Vagina (tissue), 2 donors: ENCODE measurements at regions of chr16 and their contacts with region 1.

Region 1: DNA sequence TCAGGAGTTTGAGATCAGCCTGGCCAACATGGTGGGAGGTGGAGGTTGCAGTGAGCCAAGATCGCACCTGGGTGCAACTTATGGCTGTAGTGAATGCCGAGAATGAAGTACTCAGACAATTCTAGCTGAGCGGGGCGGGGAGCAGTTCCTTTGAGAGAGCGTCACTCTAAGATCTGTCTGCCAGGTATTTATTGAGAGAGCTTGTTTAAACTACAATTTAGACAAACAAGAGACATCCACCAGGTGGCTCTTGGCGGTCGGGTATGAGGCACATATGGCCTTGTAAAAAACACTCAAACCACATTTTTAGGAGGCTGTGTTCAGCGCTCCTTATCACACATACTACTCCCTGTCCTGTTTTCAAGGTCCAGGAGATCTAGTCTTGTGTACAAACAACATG is 40.6 kb upstream of the CDH1 start:
- DNase-seq: no peak
- H3K4me3 ChIP-seq: no peak overlapping the region
- H3K27ac ChIP-seq: no peak overlapping the region
- H3K4me1 ChIP-seq: no peaks in the 10 kb centered on the region
- H3K27me3 ChIP-seq: no peaks in the 10 kb centered on the region
- CTCF ChIP-seq: no peak
- POLR2A ChIP-seq: no peak

Region 2: DNA sequence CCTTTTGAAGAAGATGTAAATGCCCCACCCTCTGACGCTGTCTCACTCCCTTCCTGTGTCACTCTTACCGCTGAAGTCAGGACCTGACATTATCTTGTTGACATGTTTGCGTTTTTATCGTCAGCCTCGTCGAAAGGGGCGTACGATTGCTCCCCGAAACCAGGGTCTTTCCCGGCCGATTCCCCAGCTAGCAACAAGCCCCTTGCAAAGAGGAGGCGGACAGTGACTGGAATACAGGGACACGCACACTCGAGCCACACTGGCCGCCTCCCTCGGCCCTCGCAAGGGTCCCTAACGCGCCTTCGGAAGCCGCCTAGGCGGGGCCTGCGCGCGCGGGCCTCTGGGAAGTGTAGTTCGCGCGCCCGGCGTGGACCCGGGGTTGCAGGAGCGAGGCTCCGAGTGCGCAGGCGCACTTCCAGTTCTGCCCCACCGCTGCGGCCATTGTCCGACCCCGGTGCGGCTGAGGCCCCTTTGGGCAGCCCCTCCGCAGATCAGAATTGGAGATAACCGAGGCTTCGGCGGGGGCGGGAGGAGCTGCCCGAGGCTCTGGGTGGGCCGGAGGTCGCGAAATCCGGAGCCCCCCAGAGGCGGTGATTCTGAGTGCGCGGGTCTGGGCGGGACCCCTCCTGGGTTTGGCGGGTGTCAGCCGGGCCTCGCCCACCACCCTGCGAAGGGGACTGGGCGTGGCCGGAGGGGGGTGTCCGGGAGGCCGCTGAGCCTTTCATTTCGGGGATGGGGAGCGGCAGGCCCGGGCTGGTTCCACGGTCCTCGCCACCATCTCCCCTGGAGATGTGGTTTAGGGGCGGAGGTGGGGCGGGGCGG is 157.4 kb before region 1 on chr16 and contains the start of gene ZFP90:
- intact Hi-C with region 1: no loop called
- DNase-seq: no peak
- H3K4me3 ChIP-seq: peak within 1 kb of the TSS; percentile 86 to 88
- H3K27ac ChIP-seq: peak within 1 kb of the TSS; percentile 84
- H3K4me1 ChIP-seq: no peaks in the 10 kb centered on the region
- H3K27me3 ChIP-seq: no peaks in the 10 kb centered on the region
- CTCF ChIP-seq: no peak
- POLR2A ChIP-seq: no peak
- total RNA-seq, gene ZFP90: 41.3 TPM

Region 3: GRCh38 chr16:68575082-68575481 is 121.4 kb before region 1 on chr16:
- intact Hi-C with region 1: loop called (anchors 10 kb)
- DNase-seq: no peak
- H3K4me3 ChIP-seq: no peak overlapping the region
- H3K27ac ChIP-seq: no peak overlapping the region
- H3K4me1 ChIP-seq: no peaks in the 10 kb centered on the region
- H3K27me3 ChIP-seq: no peaks in the 10 kb centered on the region
- CTCF ChIP-seq: no peak
- POLR2A ChIP-seq: no peak